GM10248 (cell line): ENCODE measurements at regions of chr14 and their contacts with region 1.

Region 1: GRCh38 chr14:88040146-88040545 is 35.2 kb downstream of the GPR65 start:
- DNase-seq: no peak
- CTCF ChIP-seq: no peak

Region 2: DNA sequence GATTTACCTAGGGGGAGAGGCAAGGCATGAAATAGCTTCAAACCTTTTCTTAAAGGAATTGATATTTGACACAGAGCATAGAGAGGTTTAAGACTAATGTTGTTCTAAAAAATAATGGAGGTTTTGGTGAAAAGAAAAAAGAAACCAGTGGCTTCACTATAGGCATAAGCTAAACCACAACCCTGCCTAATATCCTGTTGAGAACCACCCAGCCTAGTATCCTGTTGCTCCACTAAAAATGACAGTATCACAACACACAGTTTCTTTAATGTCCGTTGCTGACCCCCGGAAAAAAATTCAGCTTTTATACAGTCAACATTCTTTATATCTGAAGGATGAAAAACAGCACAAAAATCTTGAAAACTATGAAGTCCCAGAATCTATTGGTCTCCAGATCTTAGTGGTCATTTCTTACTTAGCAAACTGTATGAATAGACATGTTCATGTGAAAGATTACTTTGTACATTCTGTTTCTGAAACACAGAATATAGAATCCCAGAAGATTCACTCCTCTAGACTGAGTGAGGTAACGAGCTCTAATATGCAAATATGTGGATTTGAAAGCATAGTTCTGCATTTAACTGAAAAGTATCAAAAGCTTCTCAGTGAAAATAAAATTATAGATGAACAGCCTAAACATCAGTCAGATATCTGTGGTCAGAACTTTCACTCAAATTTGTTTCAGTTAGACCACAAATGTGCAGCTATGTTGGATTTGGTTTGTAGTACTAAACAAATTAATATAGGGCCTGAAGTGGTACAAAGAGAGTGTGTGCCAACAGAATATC is 87.6 kb before region 1 on chr14:
- CTCF ChIA-PET with region 1: no interaction called
- POLR2A ChIA-PET with region 1: no interaction called
- DNase-seq: peak; percentile 4
- CTCF ChIP-seq: no peak

Region 3: GRCh38 chr14:88026890-88027289 is 13.3 kb before region 1 on chr14:
- CTCF ChIA-PET with region 1: interaction called, 10 read pairs
- POLR2A ChIA-PET with region 1: no interaction called
- DNase-seq: no peak
- CTCF ChIP-seq: no peak